Heart left ventricle (tissue), 16 donors: ENCODE measurements at regions of chr3 and their contacts with region 1.

Region 1: GRCh38 chr3:125165189-125165947 is 47.2 kb downstream of the SLC12A8 start:
- DNase-seq: peak; percentile 56 to 69 (median 59)
- ATAC-seq: peak; percentile 76 to 86 (median 81)
- H3K4me3 ChIP-seq: no peak overlapping the region
- H3K27ac ChIP-seq: no peak overlapping the region
- H3K4me1 ChIP-seq: peaks cover 7 to 42% (median 20%) of the 10 kb centered on the region in 12 donors
- H3K27me3 ChIP-seq: no peaks in the 10 kb centered on the region
- CTCF ChIP-seq: peak; percentile 68 to 89 (median 80)
- POLR2A ChIP-seq: no peak

Region 2: DNA sequence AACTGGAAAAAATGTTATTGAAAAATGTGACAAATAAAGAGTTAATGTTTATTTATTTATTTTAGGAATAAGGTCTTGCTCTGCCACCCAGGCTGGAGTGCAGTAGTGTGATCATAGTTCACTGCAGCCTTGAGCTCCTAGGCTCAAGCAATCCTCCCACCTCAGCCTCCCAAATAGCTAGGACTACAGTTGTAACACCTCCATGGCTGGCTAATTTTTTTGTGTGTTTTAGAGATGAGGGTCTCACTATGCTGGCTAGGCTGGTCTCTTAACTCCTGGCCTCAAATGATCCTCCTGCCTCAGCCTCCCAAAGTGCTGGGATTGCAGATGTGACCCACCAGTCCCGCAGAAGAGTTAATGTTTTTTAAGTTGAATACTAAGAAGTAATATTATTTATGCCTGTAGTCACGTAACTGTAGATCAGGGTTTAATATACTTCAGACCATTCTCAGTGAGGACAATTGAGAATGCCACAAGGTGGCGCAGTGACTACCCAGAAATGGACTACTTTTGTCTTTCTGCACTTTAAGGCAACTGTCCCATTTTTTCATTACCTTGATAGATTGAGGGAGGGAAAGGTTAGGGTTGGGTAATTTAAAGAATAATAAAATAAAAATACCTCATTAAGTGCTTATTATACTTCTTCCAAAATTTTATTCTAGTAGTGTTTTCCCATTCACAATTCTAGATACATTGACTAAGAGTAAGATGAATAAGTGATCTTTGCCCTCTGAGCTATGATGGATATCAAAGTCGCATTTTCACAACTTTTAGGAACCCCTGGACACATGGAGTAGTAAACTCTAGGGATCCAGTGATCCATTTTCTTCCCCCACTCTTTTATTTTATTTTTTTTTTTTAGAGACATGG is 236.8 kb before region 1 on chr3:
- intact Hi-C with region 1: loop called (anchors 1 to 5 kb)
- DNase-seq: peak; percentile 50 to 79 (median 60)
- ATAC-seq: peak in 2 of 4 donors; percentile 68 to 76
- H3K4me3 ChIP-seq: no peak overlapping the region
- H3K27ac ChIP-seq: no peak overlapping the region
- H3K4me1 ChIP-seq: peaks cover 0 to 11% (median 0%) of the 10 kb centered on the region in 12 donors
- H3K27me3 ChIP-seq: no peaks in the 10 kb centered on the region
- CTCF ChIP-seq: peak; percentile 61 to 87 (median 75)
- POLR2A ChIP-seq: no peak

Region 3: GRCh38 chr3:124976383-124976782 is 189.0 kb before region 1 on chr3:
- intact Hi-C with region 1: loop called in 1 of 10 experiments (anchors 5 kb)
- DNase-seq: no peak
- ATAC-seq: no peak
- H3K4me3 ChIP-seq: no peak overlapping the region
- H3K27ac ChIP-seq: no peak overlapping the region
- H3K4me1 ChIP-seq: peaks cover 0 to 7% (median 0%) of the 10 kb centered on the region in 12 donors
- H3K27me3 ChIP-seq: no peaks in the 10 kb centered on the region
- CTCF ChIP-seq: no peak
- POLR2A ChIP-seq: no peak

Region 4: DNA sequence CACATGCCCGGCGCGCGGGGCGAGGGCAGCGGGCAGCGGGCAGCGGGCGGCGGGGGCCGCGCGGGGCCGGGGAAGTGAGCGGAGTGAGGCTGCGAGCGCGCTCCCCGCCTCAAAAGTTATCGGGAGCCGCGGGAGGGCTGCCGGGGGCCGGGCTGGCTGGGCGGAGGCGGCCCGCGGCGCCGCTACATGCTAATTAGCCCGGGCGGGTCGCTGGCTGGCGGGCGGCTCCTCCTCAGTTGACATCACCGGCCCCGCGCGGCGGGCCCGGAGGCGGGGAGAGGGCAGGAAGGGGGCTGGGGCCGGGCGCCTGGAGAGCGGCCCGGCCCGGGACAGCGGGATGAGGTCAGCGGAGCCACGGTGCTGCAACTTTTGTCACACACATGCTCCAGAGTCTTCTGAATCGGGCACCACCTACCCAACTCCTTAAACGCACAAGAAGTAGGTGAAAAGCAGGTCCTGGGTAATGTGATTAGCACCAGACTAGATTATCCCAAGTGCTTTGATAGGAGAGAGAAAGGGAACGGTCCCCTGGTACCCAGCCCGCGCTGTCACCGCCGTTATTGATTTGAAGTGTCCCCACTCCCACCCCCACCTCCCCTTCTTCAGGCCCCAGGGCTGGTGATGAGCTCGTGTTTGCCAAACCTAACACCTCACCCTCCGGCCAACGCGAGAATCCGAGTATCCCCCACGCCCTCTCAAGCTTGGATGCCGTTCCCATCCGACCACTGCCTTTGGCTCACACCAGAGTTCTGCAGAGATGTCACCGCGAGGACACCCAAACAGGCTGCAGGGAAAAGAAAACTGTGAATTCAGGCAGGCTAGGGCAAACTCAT is 109.2 kb before region 1 on chr3 and contains the start of gene HEG1:
- intact Hi-C with region 1: loop called in 3 of 10 experiments (anchors 5 kb)
- DNase-seq: peak; percentile 93 to 96 (median 94)
- ATAC-seq: peak; percentile 83 to 93 (median 90)
- H3K4me3 ChIP-seq: peak within 1 kb of the TSS; percentile 73 to 97 (median 88)
- H3K27ac ChIP-seq: peak within 1 kb of the TSS; percentile 82 to 99 (median 94)
- H3K4me1 ChIP-seq: peaks cover 11 to 67% (median 56%) of the 10 kb centered on the region in 12 donors
- H3K27me3 ChIP-seq: no peaks in the 10 kb centered on the region
- CTCF ChIP-seq: no peak
- POLR2A ChIP-seq: peak in 1 of 2 donors; percentile 74
- total RNA-seq, gene HEG1: 68.1 to 211 (median 121) TPM